Activated B cell treated with CpG ODN at 0.5 μM for 24 hours (primary cell): ENCODE measurements at regions of chr17 and their contacts with region 1.

Region 1: DNA sequence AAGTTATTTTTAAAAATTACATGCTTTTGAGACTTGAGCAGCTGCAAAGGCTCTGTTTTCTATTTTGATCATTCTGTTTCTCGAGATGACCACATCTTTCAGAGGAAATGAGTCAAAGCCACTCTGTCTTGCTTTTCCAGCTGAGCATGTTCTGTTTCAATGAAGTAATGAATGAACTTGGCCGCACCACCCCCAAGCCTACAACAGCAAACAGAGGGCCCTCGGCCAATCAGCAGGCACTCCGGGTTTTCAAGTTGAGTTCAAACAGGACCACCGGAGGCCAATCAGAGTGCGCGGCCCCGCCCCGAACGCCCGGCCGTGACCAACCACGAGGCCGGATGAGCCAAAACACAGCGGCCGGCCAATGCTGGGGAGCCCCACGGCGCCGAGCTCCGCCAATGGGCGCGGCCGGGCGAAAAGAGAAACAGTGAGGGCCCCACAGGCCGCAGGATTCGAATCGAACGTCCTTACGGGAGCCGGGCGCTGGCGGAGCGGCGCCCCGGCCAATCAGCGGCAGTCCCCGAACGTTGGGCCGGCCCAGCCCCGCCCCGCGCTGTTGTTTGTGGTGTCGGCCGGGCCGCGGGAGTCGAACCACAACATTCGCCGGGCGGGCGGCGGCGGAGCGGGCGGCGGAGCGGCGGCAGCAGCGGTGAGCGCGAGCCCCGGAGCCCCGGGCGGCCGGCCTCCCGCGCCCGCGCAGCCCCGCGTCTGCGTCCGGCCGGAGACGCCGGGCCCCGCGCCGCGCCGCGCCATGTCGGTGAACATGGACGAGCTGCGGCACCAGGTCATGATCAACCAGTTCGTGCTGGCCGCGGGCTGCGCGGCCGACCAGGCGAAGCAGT is at the start of gene UBALD2:
- DNase-seq: peak; percentile 97
- ATAC-seq: peak; percentile 77
- H3K4me3 Mint-ChIP-seq: peak within 1 kb of the TSS; percentile 92
- H3K27ac Mint-ChIP-seq: peak within 1 kb of the TSS; percentile 94
- H3K4me1 Mint-ChIP-seq: peaks cover 80% of the 10 kb centered on the region
- H3K27me3 Mint-ChIP-seq: no peaks in the 10 kb centered on the region
- CTCF ChIP-seq: no peak
- total RNA-seq, gene UBALD2: 144 and 152 TPM in 2 replicates

Region 2: DNA sequence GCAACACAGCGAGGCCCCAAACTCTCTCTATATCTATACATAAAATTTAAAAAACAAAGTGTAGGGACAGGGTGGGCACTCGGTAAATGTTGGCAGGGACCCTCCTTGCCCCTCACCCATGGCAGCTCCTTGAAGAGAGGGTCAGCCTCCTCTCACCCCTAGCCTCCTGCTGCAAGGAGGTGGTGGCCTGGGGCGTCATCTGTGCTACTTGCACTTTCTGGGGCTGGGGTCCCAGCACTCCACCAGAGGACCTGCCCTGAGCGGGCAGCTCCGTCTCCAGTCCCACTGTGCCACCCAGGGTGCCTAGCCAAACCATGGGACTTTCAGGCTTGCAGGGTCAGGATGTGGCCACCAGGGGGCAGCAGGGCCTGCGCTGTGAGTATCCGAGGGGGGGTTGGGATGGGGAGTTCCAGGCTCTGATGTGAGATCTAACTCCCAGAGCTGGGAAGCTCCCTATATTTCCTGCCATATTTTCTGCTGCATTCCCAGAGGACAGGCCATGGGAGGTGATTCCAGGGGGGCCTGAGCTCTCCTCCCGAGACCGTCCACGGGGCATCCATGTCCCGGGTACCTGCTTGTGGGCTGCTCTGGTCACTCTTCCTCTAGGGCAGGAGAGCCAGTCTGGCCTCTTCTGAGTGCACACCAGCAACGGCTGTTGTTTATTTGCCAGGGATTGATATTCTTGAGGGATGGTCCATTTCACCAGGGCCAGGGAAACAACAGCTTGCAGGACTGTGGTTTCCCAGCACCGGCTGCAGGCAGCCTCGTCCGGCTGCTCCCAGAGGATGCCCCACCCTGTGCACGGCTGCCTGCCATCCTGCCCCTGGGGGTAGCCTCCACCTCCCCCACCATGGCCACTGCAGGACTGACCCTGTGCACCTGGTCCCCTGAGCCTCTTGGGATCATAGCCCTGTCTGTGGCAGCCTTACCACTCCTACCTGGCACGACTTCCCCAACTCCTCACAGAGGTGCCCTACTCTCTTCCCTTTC is 1896.6 kb before region 1 on chr17:
- CTCF ChIA-PET with region 1: no interaction called
- POLR2A ChIA-PET with region 1: interaction called, 15 read pairs
- intact Hi-C with region 1: no loop called
- DNase-seq: peak; percentile 64
- ATAC-seq: peak; percentile 77
- H3K4me3 Mint-ChIP-seq: no peak overlapping the region
- H3K27ac Mint-ChIP-seq: no peak overlapping the region
- H3K4me1 Mint-ChIP-seq: peaks cover 14% of the 10 kb centered on the region
- H3K27me3 Mint-ChIP-seq: peaks cover 17% of the 10 kb centered on the region
- CTCF ChIP-seq: peak; percentile 58

Region 3: GRCh38 chr17:76121932-76122430 is 143.0 kb before region 1 on chr17:
- CTCF ChIA-PET with region 1: interaction called, 8 read pairs
- POLR2A ChIA-PET with region 1: interaction called, 257 read pairs
- intact Hi-C with region 1: no loop called
- DNase-seq: no peak
- ATAC-seq: peak; percentile 29
- H3K4me3 Mint-ChIP-seq: peak overlapping the region; percentile 62
- H3K27ac Mint-ChIP-seq: peak overlapping the region; percentile 50
- H3K4me1 Mint-ChIP-seq: peaks cover 17% of the 10 kb centered on the region
- H3K27me3 Mint-ChIP-seq: peaks cover 3% of the 10 kb centered on the region
- CTCF ChIP-seq: no peak

Region 4: DNA sequence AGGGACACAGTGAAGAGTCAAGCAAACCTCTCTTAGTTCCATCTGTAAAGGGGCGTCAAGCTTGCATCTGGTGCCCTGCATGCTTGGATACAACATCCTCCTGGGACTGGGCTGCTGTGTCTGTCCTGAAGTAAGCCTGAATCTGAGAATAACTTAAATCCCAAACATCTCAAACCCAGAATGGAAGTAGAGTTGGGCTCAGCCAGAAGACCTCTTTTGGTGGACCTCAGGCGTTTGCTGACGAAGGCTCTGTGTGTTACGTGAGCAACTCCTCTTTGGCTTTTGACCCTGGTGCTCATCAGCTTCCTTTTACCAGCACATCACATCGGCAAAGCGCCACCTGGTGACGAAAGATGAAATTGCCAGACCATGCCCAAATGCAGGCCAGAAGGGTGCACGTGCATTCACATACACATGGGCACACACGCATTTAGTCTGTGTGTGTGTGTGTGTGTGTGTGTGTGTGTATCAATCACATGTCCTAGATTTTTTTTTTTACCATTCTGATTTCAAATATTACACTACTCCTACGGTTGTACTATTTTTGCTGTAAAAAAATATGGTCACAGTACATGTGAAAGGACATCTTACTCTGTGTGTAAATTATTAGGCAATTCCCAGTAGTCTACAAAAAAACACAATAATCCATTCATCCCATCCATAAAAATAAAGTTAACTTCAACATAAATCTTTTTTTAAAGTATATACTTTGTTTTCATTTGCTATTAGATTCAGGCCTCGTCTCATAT is 82.8 kb before region 1 on chr17:
- CTCF ChIA-PET with region 1: interaction called, 9 read pairs
- POLR2A ChIA-PET with region 1: interaction called, 481 read pairs
- intact Hi-C with region 1: no loop called
- DNase-seq: peak; percentile 87
- ATAC-seq: peak; percentile 97
- H3K4me3 Mint-ChIP-seq: no peak overlapping the region
- H3K27ac Mint-ChIP-seq: no peak overlapping the region
- H3K4me1 Mint-ChIP-seq: peaks cover 34% of the 10 kb centered on the region
- H3K27me3 Mint-ChIP-seq: no peaks in the 10 kb centered on the region
- CTCF ChIP-seq: peak; percentile 21

Region 5: GRCh38 chr17:76204277-76204676 is 60.7 kb before region 1 on chr17:
- CTCF ChIA-PET with region 1: no interaction called
- POLR2A ChIA-PET with region 1: interaction called, 10 read pairs
- intact Hi-C with region 1: no loop called
- DNase-seq: no peak
- ATAC-seq: no peak
- H3K4me3 Mint-ChIP-seq: no peak overlapping the region
- H3K27ac Mint-ChIP-seq: no peak overlapping the region
- H3K4me1 Mint-ChIP-seq: peaks cover 17% of the 10 kb centered on the region
- H3K27me3 Mint-ChIP-seq: no peaks in the 10 kb centered on the region
- CTCF ChIP-seq: no peak

Region 6: GRCh38 chr17:76246080-76247066 is 18.6 kb before region 1 on chr17:
- CTCF ChIA-PET with region 1: interaction called, 4 read pairs
- POLR2A ChIA-PET with region 1: interaction called, 135 read pairs
- intact Hi-C with region 1: loop called (anchors 1 kb)
- DNase-seq: no peak
- ATAC-seq: peak; percentile 98
- H3K4me3 Mint-ChIP-seq: peak overlapping the region; percentile 56
- H3K27ac Mint-ChIP-seq: peak overlapping the region; percentile 73
- H3K4me1 Mint-ChIP-seq: peaks cover 24% of the 10 kb centered on the region
- H3K27me3 Mint-ChIP-seq: peaks cover 28% of the 10 kb centered on the region
- CTCF ChIP-seq: no peak

Region 7: DNA sequence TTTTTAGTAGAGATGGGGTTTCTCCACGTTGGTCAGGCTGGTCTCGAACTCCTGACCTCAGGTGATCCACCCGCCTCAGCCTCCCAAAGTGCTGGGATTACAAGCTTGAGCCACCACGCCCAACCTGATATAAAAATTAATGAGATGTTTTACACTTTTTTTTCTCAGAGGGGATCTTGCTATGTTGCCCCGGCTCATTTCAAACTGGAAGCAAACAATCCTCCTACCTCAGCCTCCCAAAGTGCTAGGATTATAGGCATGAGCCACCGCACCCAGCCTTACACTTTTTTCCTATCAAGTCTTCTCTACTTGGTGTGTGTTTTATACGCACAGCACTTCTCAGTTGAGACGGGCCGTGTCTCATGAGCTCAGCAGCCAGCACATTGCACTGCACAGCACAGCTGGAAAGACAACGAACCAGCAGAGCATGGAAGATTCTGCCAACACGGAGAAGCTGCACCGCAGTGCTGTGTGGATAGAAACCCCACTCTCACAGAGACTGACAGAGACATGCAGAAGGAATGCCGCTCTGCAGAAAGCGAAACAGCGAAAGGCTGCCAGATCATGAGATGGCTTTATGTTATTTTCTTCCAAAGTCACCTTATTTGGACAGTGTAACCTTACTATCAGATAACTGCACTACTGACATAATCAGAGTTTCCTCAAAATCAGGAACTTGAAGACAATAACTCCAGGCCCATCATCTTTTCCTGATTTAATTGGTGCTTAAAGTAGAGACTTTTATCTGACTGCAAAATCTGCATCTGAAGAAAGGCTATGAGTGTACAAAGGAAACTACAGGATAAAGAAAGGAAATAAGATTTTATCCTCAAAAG is 49.6 kb after region 1 on chr17:
- CTCF ChIA-PET with region 1: no interaction called
- POLR2A ChIA-PET with region 1: no interaction called
- intact Hi-C with region 1: no loop called
- DNase-seq: no peak
- ATAC-seq: no peak
- H3K4me3 Mint-ChIP-seq: no peak overlapping the region
- H3K27ac Mint-ChIP-seq: no peak overlapping the region
- H3K4me1 Mint-ChIP-seq: peaks cover under 1% of the 10 kb centered on the region
- H3K27me3 Mint-ChIP-seq: no peaks in the 10 kb centered on the region
- CTCF ChIP-seq: no peak

Region 8: GRCh38 chr17:76384222-76384986 is 119.4 kb after region 1 on chr17 and contains the start of gene SPHK1:
- CTCF ChIA-PET with region 1: no interaction called
- POLR2A ChIA-PET with region 1: interaction called, 11 read pairs
- intact Hi-C with region 1: no loop called
- DNase-seq: peak; percentile 77
- ATAC-seq: peak; percentile 75
- H3K4me3 Mint-ChIP-seq: peak within 1 kb of the TSS; percentile 86
- H3K27ac Mint-ChIP-seq: peak within 1 kb of the TSS; percentile 71
- H3K4me1 Mint-ChIP-seq: peaks cover 15% of the 10 kb centered on the region
- H3K27me3 Mint-ChIP-seq: peaks cover 2% of the 10 kb centered on the region
- CTCF ChIP-seq: no peak
- total RNA-seq, gene SPHK1: 1.1 and 1.3 TPM in 2 replicates